Heart left ventricle (tissue), 16 donors: ENCODE measurements at regions of chr17 and their contacts with region 1.

Region 1: GRCh38 chr17:76506408-76507349 is 5.5 kb upstream of the RHBDF2 start:
- DNase-seq: peak; percentile 75 to 91 (median 80)
- ATAC-seq: peak; percentile 70 to 82 (median 78)
- H3K4me3 ChIP-seq: no peak overlapping the region
- H3K27ac ChIP-seq: no peak overlapping the region
- H3K4me1 ChIP-seq: peaks cover 0 to 38% (median 9%) of the 10 kb centered on the region in 12 donors
- H3K27me3 ChIP-seq: peaks cover 0 to 9% (median 0%) of the 10 kb centered on the region in 9 donors
- CTCF ChIP-seq: peak; percentile 90 to 97 (median 94)
- POLR2A ChIP-seq: no peak

Region 2: GRCh38 chr17:76452127-76452659 is 54.5 kb before region 1 on chr17:
- intact Hi-C with region 1: no loop called
- DNase-seq: peak in 1 of 5 donors; percentile 53
- ATAC-seq: peak in 3 of 4 donors; percentile 29 to 61 (median 42)
- H3K4me3 ChIP-seq: peak overlapping the region; percentile 74 to 100 (median 94)
- H3K27ac ChIP-seq: peak overlapping the region; percentile 74 to 98 (median 88)
- H3K4me1 ChIP-seq: peaks cover 9 to 42% (median 28%) of the 10 kb centered on the region in 12 donors
- H3K27me3 ChIP-seq: no peaks in the 10 kb centered on the region
- CTCF ChIP-seq: no peak
- POLR2A ChIP-seq: no peak

Region 3: DNA sequence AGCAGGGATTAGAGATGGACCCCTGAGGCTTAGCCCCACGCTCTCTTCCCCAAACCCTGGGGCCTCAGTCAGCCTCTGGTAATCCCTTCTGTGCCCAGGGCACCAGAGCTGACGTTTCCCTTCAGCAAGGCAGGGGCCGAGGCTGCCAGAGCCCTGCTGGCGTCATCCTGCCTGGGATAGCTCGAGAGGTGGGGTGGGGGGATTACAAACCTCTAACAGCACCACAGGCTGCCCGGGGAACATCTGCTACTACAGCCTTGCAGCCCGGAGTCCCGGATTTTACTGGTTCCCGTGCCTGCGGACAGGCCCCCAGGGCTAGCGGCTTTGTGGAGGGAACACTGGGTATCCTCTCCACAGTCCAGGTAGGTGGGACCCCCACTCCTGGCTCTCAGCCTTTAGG is 39.3 kb before region 1 on chr17 and contains the start of gene AANAT:
- intact Hi-C with region 1: loop called (anchors 1 to 2 kb)
- DNase-seq: peak in 1 of 5 donors; percentile 50
- ATAC-seq: no peak
- H3K4me3 ChIP-seq: no peak within 1 kb of the TSS
- H3K27ac ChIP-seq: no peak within 1 kb of the TSS
- H3K4me1 ChIP-seq: peaks cover 0 to 12% (median 2%) of the 10 kb centered on the region in 12 donors
- H3K27me3 ChIP-seq: no peaks in the 10 kb centered on the region
- CTCF ChIP-seq: no peak
- POLR2A ChIP-seq: no peak
- total RNA-seq, gene AANAT: not detected